ENCODE measurements at regions of chr17 and their contacts with region 1.

Region 1: GRCh38 chr17:72120642-72121163 is at the start of gene SOX9:
- DNase-seq: peak; percentile 94 to 97 (median 96)
- ATAC-seq: peak; percentile 88
- H3K4me3 ChIP-seq: peak within 1 kb of the TSS; percentile 70 to 79
- H3K27ac ChIP-seq: peak within 1 kb of the TSS; percentile 86 to 96 (median 94)
- H3K4me1 ChIP-seq: peaks cover 39% of the 10 kb centered on the region
- H3K27me3 ChIP-seq: no peaks in the 10 kb centered on the region
- CTCF ChIP-seq: peak in 2 of 7 experiments; percentile 2 to 3
- POLR2A ChIP-seq: peak; percentile 97 to 99 (median 99)
- total RNA-seq, gene SOX9: 35.8 to 47.5 TPM

Region 2: GRCh38 chr17:71472809-71473789 is 647.6 kb before region 1 on chr17:
- intact Hi-C with region 1: loop called (anchors 10 kb)
- DNase-seq: peak; percentile 22 to 48 (median 34)
- ATAC-seq: peak; percentile 71
- H3K4me3 ChIP-seq: no peak overlapping the region
- H3K27ac ChIP-seq: no peak overlapping the region
- H3K4me1 ChIP-seq: peaks cover 5% of the 10 kb centered on the region
- H3K27me3 ChIP-seq: no peaks in the 10 kb centered on the region
- CTCF ChIP-seq: peak; percentile 53 to 81 (median 71)
- POLR2A ChIP-seq: no peak

Region 3: DNA sequence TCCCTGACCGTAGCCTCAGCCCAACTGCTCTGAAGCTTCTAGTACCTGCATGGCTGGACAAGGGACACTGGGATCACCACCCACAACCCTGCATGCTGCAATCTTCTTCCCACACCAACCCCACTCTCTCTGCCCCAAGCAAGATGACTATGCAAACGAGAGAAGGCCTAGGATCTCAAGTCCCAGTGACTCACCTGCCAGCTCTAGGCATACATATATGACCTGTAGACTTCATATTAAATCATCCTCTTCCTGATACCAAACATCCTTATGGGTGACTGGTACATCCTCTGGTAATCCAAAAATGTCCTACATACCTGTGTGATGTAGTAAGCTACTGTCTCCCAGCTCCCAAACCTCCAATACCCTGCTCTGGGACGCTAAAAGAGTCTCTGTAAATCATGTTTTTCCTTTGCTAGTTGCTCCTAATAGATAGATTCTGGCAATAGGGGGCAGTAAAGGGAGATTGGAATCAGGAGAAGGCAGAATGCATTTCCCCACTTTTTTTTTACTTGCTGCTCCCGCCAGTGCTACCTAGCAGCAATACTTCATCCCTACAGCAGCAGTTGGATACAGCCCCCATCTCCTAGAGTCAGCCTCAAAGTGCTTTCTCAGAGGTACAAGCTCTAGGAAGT is 43.3 kb before region 1 on chr17:
- intact Hi-C with region 1: no loop called
- DNase-seq: no peak
- ATAC-seq: no peak
- H3K4me3 ChIP-seq: no peak overlapping the region
- H3K27ac ChIP-seq: peak overlapping the region in 3 of 4 donors; percentile 53 to 62 (median 61)
- H3K4me1 ChIP-seq: peaks cover 22% of the 10 kb centered on the region
- H3K27me3 ChIP-seq: no peaks in the 10 kb centered on the region
- CTCF ChIP-seq: no peak
- POLR2A ChIP-seq: no peak

Region 4: GRCh38 chr17:72193391-72194106 is 72.8 kb after region 1 on chr17:
- intact Hi-C with region 1: no loop called
- DNase-seq: no peak
- ATAC-seq: no peak
- H3K4me3 ChIP-seq: no peak overlapping the region
- H3K27ac ChIP-seq: no peak overlapping the region
- H3K4me1 ChIP-seq: no peaks in the 10 kb centered on the region
- H3K27me3 ChIP-seq: no peaks in the 10 kb centered on the region
- CTCF ChIP-seq: no peak
- POLR2A ChIP-seq: no peak

Region 5: GRCh38 chr17:72479113-72479512 is 358.4 kb after region 1 on chr17:
- intact Hi-C with region 1: no loop called
- DNase-seq: peak in 3 of 4 donors; percentile 53 to 69 (median 53)
- ATAC-seq: no peak
- H3K4me3 ChIP-seq: no peak overlapping the region
- H3K27ac ChIP-seq: peak overlapping the region in 2 of 4 donors; percentile 19 to 44
- H3K4me1 ChIP-seq: peaks cover 55% of the 10 kb centered on the region
- H3K27me3 ChIP-seq: no peaks in the 10 kb centered on the region
- CTCF ChIP-seq: peak; percentile 7 to 54 (median 23)
- POLR2A ChIP-seq: no peak